Psoas muscle (tissue), 8 donors: ENCODE measurements at regions of chr9 and their contacts with region 1.

Region 1: GRCh38 chr9:107087222-107087621 is 195.9 kb upstream of the RAD23B start:
- DNase-seq: no peak
- ATAC-seq: peak; percentile 46 to 69 (median 66)
- H3K4me3 ChIP-seq: no peak overlapping the region
- H3K27ac ChIP-seq: no peak overlapping the region
- H3K4me1 ChIP-seq: peaks cover 14% of the 10 kb centered on the region
- H3K27me3 ChIP-seq: no peaks in the 10 kb centered on the region
- CTCF ChIP-seq: peak; percentile 33

Region 2: GRCh38 chr9:107119735-107120134 is 32.5 kb after region 1 on chr9:
- intact Hi-C with region 1: loop called in 1 of 2 experiments (anchors 5 kb)
- DNase-seq: no peak
- ATAC-seq: no peak
- H3K4me3 ChIP-seq: no peak overlapping the region
- H3K27ac ChIP-seq: no peak overlapping the region
- H3K4me1 ChIP-seq: peaks cover 16% of the 10 kb centered on the region
- H3K27me3 ChIP-seq: no peaks in the 10 kb centered on the region
- CTCF ChIP-seq: no peak

Region 3: DNA sequence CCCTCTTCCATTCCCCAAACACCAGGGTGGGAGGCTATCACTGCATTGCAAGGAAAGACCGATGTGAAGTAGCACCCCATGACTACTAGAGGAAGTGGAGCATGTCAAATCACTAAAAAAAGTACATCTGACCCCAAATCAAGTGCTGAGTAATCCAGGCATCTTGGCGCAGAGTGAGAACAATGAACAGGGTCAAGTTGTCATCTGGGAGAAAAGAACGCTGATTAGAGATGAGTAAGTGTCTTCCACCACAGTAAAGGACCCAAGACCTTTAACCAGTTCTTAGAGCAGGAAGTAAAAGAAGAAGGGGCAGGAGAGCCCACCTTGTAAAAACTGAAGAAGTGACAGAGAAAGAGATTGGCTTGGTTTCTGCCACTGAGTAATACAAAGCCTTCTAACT is 120.9 kb after region 1 on chr9:
- intact Hi-C with region 1: no loop called
- DNase-seq: no peak
- ATAC-seq: no peak
- H3K4me3 ChIP-seq: no peak overlapping the region
- H3K27ac ChIP-seq: no peak overlapping the region
- H3K4me1 ChIP-seq: no peaks in the 10 kb centered on the region
- H3K27me3 ChIP-seq: no peaks in the 10 kb centered on the region
- CTCF ChIP-seq: no peak